ENCODE measurements at regions of chr2 and their contacts with region 1.

Region 1: GRCh38 chr2:130372055-130372832 is 16.4 kb downstream of the PTPN18 start:
- DNase-seq: peak; percentile 41 to 87 (median 76)
- ATAC-seq: peak; percentile 78
- H3K4me3 ChIP-seq: peak overlapping the region; percentile 71 to 77
- H3K4me3 Mint-ChIP-seq: peak overlapping the region; percentile 90
- H3K27ac ChIP-seq: peak overlapping the region; percentile 46 to 81
- H3K27ac Mint-ChIP-seq: peak overlapping the region; percentile 93
- H3K4me1 ChIP-seq: peaks cover 41% of the 10 kb centered on the region
- H3K4me1 Mint-ChIP-seq: peaks cover 64% of the 10 kb centered on the region
- H3K27me3 ChIP-seq: no peaks in the 10 kb centered on the region
- H3K27me3 Mint-ChIP-seq: no peaks in the 10 kb centered on the region
- CTCF ChIP-seq: no peak

Region 2: DNA sequence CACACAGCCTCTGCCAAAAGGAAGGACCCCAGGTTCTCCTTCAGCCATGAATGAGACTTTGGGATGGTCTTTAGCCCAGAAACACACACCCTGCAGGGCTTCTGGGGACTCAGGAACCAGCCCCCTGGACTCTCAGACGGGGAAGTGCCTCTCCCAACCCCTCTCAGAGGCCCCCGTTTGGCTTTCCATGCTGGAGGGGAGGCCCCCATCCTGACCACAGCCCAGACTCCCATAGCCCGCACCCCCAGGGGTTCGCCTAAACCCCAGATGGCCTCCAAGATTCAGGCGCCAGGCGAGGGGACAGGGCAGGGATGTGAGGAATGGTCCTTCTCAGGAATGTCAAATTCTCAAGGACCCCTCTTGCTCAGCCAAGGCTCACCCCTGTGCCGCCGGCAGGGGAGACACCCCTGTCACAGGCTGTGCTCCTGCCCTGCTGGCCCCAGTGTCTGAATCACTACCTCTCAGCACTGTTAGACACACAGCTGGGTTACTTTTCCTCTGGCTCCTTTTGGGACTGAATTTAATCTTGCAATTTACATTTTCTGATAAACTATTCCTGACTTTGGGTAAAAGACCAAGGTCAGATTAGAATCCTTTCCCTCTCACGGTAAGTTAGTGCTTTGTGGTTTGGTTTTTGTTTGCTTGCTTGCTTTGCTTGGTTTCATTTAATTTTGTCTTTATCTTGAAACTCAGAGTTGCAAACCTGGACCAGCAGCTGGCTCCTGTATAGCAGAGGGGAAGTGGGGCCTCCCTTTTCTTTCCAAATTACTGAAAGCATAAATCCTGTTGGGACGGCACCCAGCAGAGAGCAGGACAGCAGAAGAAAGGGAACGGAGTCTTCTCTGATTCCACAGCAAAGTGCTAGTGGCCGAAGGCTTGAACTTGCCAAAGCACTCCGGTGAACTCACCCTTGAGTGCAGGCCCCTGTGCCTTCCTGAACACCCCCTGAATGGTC is 591.7 kb before region 1 on chr2:
- CTCF ChIA-PET with region 1: no interaction called
- POLR2A ChIA-PET with region 1: no interaction called
- intact Hi-C with region 1: no loop called
- DNase-seq: peak in 1 of 9 experiments; percentile 34
- ATAC-seq: no peak
- H3K4me3 ChIP-seq: no peak overlapping the region
- H3K4me3 Mint-ChIP-seq: no peak overlapping the region
- H3K27ac ChIP-seq: no peak overlapping the region
- H3K27ac Mint-ChIP-seq: no peak overlapping the region
- H3K4me1 ChIP-seq: no peaks in the 10 kb centered on the region
- H3K4me1 Mint-ChIP-seq: no peaks in the 10 kb centered on the region
- H3K27me3 ChIP-seq: no peaks in the 10 kb centered on the region
- H3K27me3 Mint-ChIP-seq: peaks cover 6% of the 10 kb centered on the region
- CTCF ChIP-seq: no peak

Region 3: GRCh38 chr2:130310881-130311280 is 61.4 kb before region 1 on chr2:
- CTCF ChIA-PET with region 1: no interaction called
- POLR2A ChIA-PET with region 1: no interaction called
- intact Hi-C with region 1: no loop called
- DNase-seq: no peak
- ATAC-seq: no peak
- H3K4me3 ChIP-seq: no peak overlapping the region
- H3K4me3 Mint-ChIP-seq: no peak overlapping the region
- H3K27ac ChIP-seq: no peak overlapping the region
- H3K27ac Mint-ChIP-seq: no peak overlapping the region
- H3K4me1 ChIP-seq: no peaks in the 10 kb centered on the region
- H3K4me1 Mint-ChIP-seq: no peaks in the 10 kb centered on the region
- H3K27me3 ChIP-seq: no peaks in the 10 kb centered on the region
- H3K27me3 Mint-ChIP-seq: peaks cover 4% of the 10 kb centered on the region
- CTCF ChIP-seq: no peak

Region 4: DNA sequence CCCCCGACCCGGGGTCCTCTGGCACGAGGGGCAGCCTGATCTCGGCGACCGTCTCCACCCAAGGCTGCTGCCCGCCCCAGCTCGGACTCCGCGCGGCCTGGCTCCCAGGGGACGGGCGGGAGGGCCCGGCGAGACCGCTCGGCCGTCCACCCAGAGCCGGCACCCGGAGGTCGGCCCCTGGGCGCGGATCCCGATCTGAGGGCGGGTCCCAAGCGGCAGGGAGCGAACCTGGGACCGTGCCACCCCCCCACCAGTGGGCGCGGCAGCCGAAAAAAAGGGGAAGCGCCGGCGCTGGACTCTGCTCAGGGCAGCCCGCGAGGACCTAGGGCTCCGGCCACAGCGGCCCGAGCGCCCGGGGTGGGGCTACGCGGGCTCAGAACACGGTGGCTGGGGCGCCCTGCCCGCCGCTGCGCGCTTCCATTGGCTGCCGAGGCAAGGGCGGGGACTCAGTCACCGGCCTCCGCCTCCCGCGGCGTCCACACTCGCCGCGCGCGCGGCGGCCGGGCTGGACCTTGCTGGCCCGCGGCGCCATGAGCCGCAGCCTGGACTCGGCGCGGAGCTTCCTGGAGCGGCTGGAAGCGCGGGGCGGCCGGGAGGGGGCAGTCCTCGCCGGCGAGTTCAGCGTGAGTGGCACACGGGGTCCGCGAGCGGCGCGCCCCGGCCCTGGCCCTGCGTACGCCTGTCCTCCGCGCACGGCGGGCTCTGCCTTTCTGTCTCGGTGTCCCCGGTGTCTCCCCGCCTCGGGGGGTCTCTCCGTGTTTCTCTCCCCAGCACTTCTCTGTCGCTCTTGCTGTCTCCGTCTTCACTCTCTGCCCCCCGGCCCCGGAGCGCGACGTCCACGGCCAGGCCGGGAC is 16.4 kb before region 1 on chr2 and contains the start of gene PTPN18:
- CTCF ChIA-PET with region 1: interaction called, 4 read pairs
- POLR2A ChIA-PET with region 1: no interaction called
- intact Hi-C with region 1: loop called (anchors 2 kb)
- DNase-seq: peak in 8 of 9 experiments; percentile 44 to 74 (median 58)
- ATAC-seq: peak; percentile 87
- H3K4me3 ChIP-seq: peak within 1 kb of the TSS; percentile 61 to 63
- H3K4me3 Mint-ChIP-seq: peak within 1 kb of the TSS; percentile 85
- H3K27ac ChIP-seq: no peak within 1 kb of the TSS
- H3K27ac Mint-ChIP-seq: no peak within 1 kb of the TSS
- H3K4me1 ChIP-seq: peaks cover 10% of the 10 kb centered on the region
- H3K4me1 Mint-ChIP-seq: peaks cover 12% of the 10 kb centered on the region
- H3K27me3 ChIP-seq: no peaks in the 10 kb centered on the region
- H3K27me3 Mint-ChIP-seq: no peaks in the 10 kb centered on the region
- CTCF ChIP-seq: peak; percentile 29
- total RNA-seq, gene PTPN18: 18.1 to 20.6 TPM

Region 5: GRCh38 chr2:130391058-130391871 is 19.0 kb after region 1 on chr2:
- CTCF ChIA-PET with region 1: interaction called, 7 read pairs
- POLR2A ChIA-PET with region 1: interaction called, 5 read pairs
- intact Hi-C with region 1: loop called in 1 of 2 experiments (anchors 2 kb)
- DNase-seq: peak in 7 of 9 experiments; percentile 35 to 71 (median 66)
- ATAC-seq: peak; percentile 97
- H3K4me3 ChIP-seq: peak overlapping the region; percentile 47 to 64
- H3K4me3 Mint-ChIP-seq: peak overlapping the region; percentile 85
- H3K27ac ChIP-seq: peak overlapping the region in 1 of 2 experiments; percentile 13
- H3K27ac Mint-ChIP-seq: peak overlapping the region; percentile 52
- H3K4me1 ChIP-seq: peaks cover 13% of the 10 kb centered on the region
- H3K4me1 Mint-ChIP-seq: peaks cover 16% of the 10 kb centered on the region
- H3K27me3 ChIP-seq: no peaks in the 10 kb centered on the region
- H3K27me3 Mint-ChIP-seq: peaks cover 21% of the 10 kb centered on the region
- CTCF ChIP-seq: no peak

Measured in CD8-positive, alpha-beta T cell (primary cell).